ENCODE measurements at regions of chr17 and their contacts with region 1.

Region 1: DNA sequence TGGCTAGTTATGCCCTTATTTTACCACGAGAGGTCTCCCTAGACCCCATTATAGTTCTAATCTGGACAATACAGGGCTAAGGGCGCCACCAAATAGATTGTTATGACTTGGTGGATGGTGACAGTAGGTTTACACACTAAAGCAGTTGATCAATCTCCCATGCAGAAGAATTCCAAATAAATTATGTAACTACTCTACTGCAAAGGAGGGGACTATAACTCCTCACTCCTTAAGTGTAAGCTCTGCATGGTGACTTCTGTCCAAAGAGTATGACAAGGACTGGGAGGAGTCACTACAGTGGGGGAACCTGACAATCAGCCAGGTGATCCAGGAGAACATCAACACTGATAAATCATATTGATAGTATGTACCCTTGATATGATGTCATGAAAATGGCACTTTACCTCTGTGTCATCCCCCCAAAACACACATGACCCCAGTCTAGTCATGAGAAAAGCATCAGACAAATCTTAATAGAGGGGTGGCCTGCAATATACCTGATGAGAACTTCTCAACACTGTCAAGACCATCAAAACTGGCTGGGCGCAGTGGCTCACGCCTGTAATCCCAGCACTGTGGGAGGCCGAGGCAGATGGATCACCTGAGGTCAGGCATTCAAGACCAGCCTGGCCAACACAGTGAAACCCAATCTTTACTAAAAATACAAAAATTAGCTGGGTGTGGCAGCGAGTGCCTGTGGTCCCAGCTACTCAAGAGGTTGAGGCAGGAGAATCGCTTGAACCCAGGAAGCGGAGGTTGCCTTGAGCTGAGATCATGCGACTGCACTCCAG is 20.1 kb upstream of the YPEL2 start:
- DNase-seq: peak; percentile 76
- CTCF ChIP-seq: peak; percentile 82

Region 2: DNA sequence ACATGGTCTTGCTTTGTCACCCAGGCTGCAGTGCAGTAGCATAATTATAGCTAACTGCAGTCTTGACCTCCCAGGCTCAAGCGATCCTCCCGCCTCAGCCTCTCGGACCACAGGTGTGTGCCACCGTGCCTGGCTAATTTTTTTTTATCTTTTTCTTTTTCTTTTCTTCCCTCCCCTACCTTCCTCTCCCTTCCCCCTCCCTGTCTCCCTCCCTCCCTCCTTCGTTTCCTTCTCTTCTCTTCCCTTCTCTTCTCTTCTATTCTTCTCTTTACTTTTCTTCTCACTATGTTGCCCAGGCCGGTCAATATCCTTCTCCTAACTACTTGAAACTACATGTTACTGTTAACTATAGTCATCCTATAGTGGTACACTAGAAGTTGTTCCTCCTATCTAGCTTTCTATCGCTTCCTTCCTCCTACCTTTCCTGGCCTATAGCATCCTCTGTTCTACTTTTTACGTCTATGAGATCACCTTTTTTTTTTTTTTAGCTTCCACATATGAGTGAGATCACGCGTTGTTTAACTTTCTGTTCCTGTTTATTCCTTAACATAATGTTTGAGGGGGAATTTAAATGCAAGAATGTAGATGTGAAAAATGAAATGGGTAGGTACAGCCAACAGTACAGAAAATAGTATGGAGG is 10.5 kb before region 1 on chr17:
- CTCF ChIA-PET with region 1: interaction called, 15 read pairs
- POLR2A ChIA-PET with region 1: no interaction called
- DNase-seq: no peak
- CTCF ChIP-seq: no peak

Region 3: GRCh38 chr17:59329638-59330313 is 18.5 kb after region 1 on chr17:
- CTCF ChIA-PET with region 1: interaction called, 16 read pairs
- POLR2A ChIA-PET with region 1: no interaction called
- DNase-seq: peak; percentile 71
- CTCF ChIP-seq: peak; percentile 84

Region 4: GRCh38 chr17:59427425-59427921 is 116.1 kb after region 1 on chr17:
- CTCF ChIA-PET with region 1: interaction called, 13 read pairs
- POLR2A ChIA-PET with region 1: no interaction called
- DNase-seq: peak; percentile 50
- CTCF ChIP-seq: no peak

Region 5: GRCh38 chr17:59451706-59452105 is 140.4 kb after region 1 on chr17:
- CTCF ChIA-PET with region 1: interaction called, 207 read pairs
- POLR2A ChIA-PET with region 1: no interaction called
- DNase-seq: no peak
- CTCF ChIP-seq: no peak